ENCODE measurements at regions of chr1 and their contacts with region 1.

Region 1: GRCh38 chr1:150072959-150073358 is 5.4 kb downstream of the VPS45 start:
- H3K4me3 Mint-ChIP-seq: no peak overlapping the region
- H3K27ac Mint-ChIP-seq: no peak overlapping the region
- H3K4me1 Mint-ChIP-seq: peaks cover 23% of the 10 kb centered on the region
- H3K27me3 Mint-ChIP-seq: no peaks in the 10 kb centered on the region

Region 2: GRCh38 chr1:149962123-149962548 is 110.8 kb before region 1 on chr1:
- intact Hi-C with region 1: no loop called
- H3K4me3 Mint-ChIP-seq: no peak overlapping the region
- H3K27ac Mint-ChIP-seq: no peak overlapping the region
- H3K4me1 Mint-ChIP-seq: peaks cover 8% of the 10 kb centered on the region
- H3K27me3 Mint-ChIP-seq: peaks cover 68% of the 10 kb centered on the region

Region 3: DNA sequence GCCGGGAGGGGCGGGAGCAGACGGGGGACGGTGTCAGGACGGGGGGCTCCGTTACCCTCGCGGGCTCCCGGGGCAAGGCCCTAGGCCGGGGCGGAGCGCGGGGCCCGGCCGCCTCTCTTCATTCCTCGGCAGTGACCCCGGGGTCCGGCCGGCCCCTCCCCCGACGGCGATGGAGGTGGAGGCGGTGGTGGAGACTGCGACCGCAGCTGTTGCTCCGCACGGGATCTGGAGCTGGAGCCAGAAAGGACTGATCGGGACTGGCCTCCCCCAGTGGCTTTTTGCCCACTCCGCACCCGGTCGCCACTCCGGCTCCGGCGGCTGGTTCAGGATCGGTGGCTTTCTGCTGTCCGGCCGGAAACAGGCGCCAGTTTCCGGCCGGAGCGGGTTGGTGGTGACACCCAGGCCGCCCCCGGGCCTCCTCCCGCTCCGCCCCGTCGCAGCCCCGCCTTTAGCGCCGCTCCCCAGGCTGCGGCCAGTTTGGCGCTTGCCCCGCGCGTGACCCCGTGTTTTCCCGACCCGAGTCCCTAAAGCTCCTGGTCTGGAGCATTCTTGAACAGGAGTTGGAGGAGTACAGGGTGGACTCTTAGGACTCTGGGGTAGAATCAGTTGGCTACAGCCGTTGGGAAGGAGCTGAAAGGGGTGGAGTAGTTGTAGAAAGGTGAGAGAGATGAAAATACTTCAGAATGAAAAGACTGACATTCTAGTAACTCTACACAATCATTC is 62.4 kb before region 1 on chr1 and contains the start of gene OTUD7B:
- intact Hi-C with region 1: no loop called
- H3K4me3 Mint-ChIP-seq: peak within 1 kb of the TSS; percentile 91
- H3K27ac Mint-ChIP-seq: peak within 1 kb of the TSS; percentile 81
- H3K4me1 Mint-ChIP-seq: peaks cover 30% of the 10 kb centered on the region
- H3K27me3 Mint-ChIP-seq: peaks cover 89% of the 10 kb centered on the region

Region 4: GRCh38 chr1:150168960-150169601 is 96.1 kb after region 1 on chr1:
- intact Hi-C with region 1: loop called (anchors 1 kb)
- H3K4me3 Mint-ChIP-seq: no peak overlapping the region
- H3K27ac Mint-ChIP-seq: no peak overlapping the region
- H3K4me1 Mint-ChIP-seq: peaks cover 51% of the 10 kb centered on the region
- H3K27me3 Mint-ChIP-seq: no peaks in the 10 kb centered on the region

Region 5: DNA sequence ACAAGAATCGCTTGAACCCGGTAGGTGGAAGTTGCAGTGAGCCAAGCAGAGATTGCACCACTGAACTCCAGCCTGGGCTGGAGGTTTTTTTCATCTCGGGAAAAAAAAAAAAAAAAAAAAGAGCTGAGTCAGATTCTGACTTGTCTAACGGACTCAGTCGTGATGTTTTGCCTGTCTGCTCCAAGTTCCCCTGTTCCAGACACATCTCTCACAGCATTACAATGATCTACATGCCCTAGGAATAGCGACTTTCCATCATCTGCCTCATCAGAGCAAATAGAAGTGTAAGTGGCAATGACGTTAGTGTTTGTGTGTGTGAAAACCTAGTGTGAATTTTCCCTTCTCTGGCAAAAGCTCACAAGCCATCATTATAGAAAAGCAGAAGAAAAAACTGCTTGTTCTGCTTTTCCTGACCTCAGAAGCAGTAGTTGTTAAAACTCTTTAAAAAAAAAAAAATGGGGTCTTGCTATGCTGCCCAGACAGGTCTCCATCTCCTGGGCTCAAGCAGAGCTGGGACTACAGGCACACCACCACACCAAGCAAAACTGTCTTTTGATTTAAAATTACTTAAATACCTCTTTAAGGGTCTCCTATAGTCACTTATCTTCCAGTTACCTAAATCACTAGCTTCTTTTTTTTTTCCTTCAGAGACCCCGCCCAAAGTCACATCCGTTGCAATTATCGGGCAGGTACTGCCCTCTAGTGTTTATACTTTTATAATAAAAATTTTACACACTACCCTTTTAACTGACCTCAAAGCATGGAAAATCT is 114.0 kb after region 1 on chr1:
- intact Hi-C with region 1: loop called (anchors 1 kb)
- H3K4me3 Mint-ChIP-seq: peak overlapping the region; percentile 59
- H3K27ac Mint-ChIP-seq: peak overlapping the region; percentile 92
- H3K4me1 Mint-ChIP-seq: peaks cover 41% of the 10 kb centered on the region
- H3K27me3 Mint-ChIP-seq: no peaks in the 10 kb centered on the region

Region 6: GRCh38 chr1:150221552-150221951 is 148.6 kb after region 1 on chr1:
- intact Hi-C with region 1: loop called (anchors 10 kb)
- H3K4me3 Mint-ChIP-seq: no peak overlapping the region
- H3K27ac Mint-ChIP-seq: no peak overlapping the region
- H3K4me1 Mint-ChIP-seq: peaks cover 16% of the 10 kb centered on the region
- H3K27me3 Mint-ChIP-seq: no peaks in the 10 kb centered on the region

Measured in dendritic cell treated with granulocyte-macrophage colony-stimulating factor and Interleukin-4, amounts not matched to agents 40 ng/mL and 50 ng/mL, for 4 days (primary cell).